Pancreas (tissue), 10 donors: ENCODE measurements at regions of chr2 and their contacts with region 1.

Region 1: GRCh38 chr2:218466016-218466521 is 47.1 kb downstream of the VIL1 start:
- DNase-seq: no peak
- ATAC-seq: peak in 3 of 4 donors; percentile 60 to 76 (median 76)
- H3K4me3 ChIP-seq: no peak overlapping the region
- H3K27ac ChIP-seq: no peak overlapping the region
- H3K4me1 ChIP-seq: peaks cover 0 to 3% (median 0%) of the 10 kb centered on the region in 3 donors
- H3K27me3 ChIP-seq: no peaks in the 10 kb centered on the region
- CTCF ChIP-seq: peak in 2 of 4 donors; percentile 15 to 22

Region 2: GRCh38 chr2:217138284-217138683 is 1327.8 kb before region 1 on chr2:
- intact Hi-C with region 1: no loop called
- DNase-seq: no peak
- ATAC-seq: no peak
- H3K4me3 ChIP-seq: no peak overlapping the region
- H3K27ac ChIP-seq: no peak overlapping the region
- H3K4me1 ChIP-seq: no peaks in the 10 kb centered on the region
- H3K27me3 ChIP-seq: no peaks in the 10 kb centered on the region
- CTCF ChIP-seq: peak in 1 of 4 donors; percentile 1

Region 3: GRCh38 chr2:218406209-218406948 is 59.7 kb before region 1 on chr2:
- intact Hi-C with region 1: loop called in 2 of 3 experiments (anchors 5 to 10 kb)
- DNase-seq: peak; percentile 97 to 99 (median 98)
- ATAC-seq: peak; percentile 85 to 88 (median 86)
- H3K4me3 ChIP-seq: peak overlapping the region in 3 of 4 donors; percentile 23 to 44 (median 34)
- H3K27ac ChIP-seq: peak overlapping the region; percentile 65 to 89 (median 76)
- H3K4me1 ChIP-seq: peaks cover 9 to 19% (median 17%) of the 10 kb centered on the region in 3 donors
- H3K27me3 ChIP-seq: no peaks in the 10 kb centered on the region
- CTCF ChIP-seq: peak; percentile 45 to 74 (median 64)

Region 4: GRCh38 chr2:218418717-218419458 is 47.2 kb before region 1 on chr2 and contains the start of gene VIL1:
- intact Hi-C with region 1: loop called in 2 of 3 experiments (anchors 5 to 10 kb)
- DNase-seq: peak in 5 of 6 donors; percentile 60 to 91 (median 76)
- ATAC-seq: peak; percentile 95 to 99 (median 96)
- H3K4me3 ChIP-seq: peak within 1 kb of the TSS in 2 of 4 donors; percentile 12 to 39
- H3K27ac ChIP-seq: peak within 1 kb of the TSS in 3 of 4 donors; percentile 20 to 53 (median 52)
- H3K4me1 ChIP-seq: no peaks in the 10 kb centered on the region
- H3K27me3 ChIP-seq: no peaks in the 10 kb centered on the region
- CTCF ChIP-seq: no peak
- total RNA-seq, gene VIL1: 10.7 to 27.9 (median 17.6) TPM

Region 5: DNA sequence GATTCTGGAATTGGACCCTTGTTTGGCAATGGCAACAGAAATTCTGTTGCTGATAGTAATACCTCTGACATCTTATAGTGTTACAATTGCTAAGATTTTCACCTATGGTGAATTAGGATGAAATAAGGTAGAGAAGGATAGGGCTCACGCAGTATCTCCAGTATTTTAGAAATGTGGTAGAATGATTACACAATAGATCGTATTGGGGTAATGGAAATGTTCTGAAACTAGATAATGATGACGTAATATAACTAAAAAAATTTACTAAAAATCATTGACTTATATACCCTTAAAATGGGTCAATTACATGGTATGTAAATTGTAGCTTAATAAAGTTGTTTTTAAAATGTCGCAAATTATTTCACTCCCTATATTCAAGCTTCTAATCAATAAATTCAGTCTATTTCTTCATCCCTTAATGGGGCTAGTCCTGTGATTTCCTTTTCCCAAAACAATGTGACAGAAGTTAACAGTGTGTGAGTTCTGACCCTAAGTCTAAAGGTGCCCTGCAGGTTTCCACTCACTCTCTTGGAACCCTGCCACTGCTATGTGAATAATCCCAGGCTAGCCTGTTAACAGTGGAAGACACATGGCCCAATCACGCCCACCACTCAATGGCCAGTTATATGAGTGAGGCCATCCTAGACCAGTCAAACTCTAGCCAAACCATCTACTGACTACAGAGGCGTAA is 70.9 kb after region 1 on chr2:
- intact Hi-C with region 1: no loop called
- DNase-seq: no peak
- ATAC-seq: no peak
- H3K4me3 ChIP-seq: no peak overlapping the region
- H3K27ac ChIP-seq: no peak overlapping the region
- H3K4me1 ChIP-seq: no peaks in the 10 kb centered on the region
- H3K27me3 ChIP-seq: no peaks in the 10 kb centered on the region
- CTCF ChIP-seq: no peak